H1 (cell line): ENCODE measurements at regions of chr2 and their contacts with region 1.

Region 1: GRCh38 chr2:110770959-110771431 is 38.6 kb downstream of the ACOXL start:
- DNase-seq: no peak
- H3K4me3 ChIP-seq: no peak overlapping the region
- H3K27ac ChIP-seq: no peak overlapping the region
- H3K4me1 ChIP-seq: peaks cover 18 to 43% (median 32%) of the 10 kb centered on the region in 4 experiments
- H3K27me3 ChIP-seq: no peaks in the 10 kb centered on the region
- CTCF ChIP-seq: no peak
- EP300 ChIP-seq: no peak
- POLR2A ChIP-seq: no peak
- RAD21 ChIP-seq: no peak

Region 2: DNA sequence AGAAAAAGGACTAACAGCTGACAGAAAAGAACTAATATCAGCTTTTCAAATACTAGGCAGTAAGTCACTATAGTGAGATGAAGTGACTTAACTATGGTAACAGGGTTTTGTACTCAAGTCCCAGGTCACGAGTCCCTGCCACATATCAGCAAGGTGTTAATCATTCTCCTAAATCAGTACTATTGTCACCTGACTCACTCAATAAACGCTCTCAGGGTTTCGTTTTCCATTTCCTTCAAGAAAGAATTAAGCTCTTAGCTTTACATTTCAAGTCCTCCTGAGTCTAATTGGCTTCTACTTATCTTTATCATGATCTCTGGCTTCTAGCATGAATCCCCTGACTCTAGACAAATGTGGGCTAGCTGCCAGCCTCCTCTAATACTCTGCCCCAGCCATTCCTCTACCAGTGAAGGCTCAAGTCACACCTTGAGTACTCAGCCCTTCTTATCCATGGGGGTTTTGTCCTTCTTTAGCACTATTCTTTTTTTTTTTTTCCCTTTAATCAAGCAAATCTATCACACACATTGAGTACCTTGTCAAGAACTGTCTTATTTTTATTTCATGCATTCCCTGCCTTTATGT is 113.2 kb before region 1 on chr2:
- CTCF ChIA-PET with region 1: no interaction called
- POLR2A ChIA-PET with region 1: no interaction called
- DNase-seq: no peak
- H3K4me3 ChIP-seq: no peak overlapping the region
- H3K27ac ChIP-seq: no peak overlapping the region
- H3K4me1 ChIP-seq: no peaks in the 10 kb centered on the region
- H3K27me3 ChIP-seq: no peaks in the 10 kb centered on the region
- CTCF ChIP-seq: no peak
- EP300 ChIP-seq: no peak
- POLR2A ChIP-seq: no peak
- RAD21 ChIP-seq: no peak

Region 3: DNA sequence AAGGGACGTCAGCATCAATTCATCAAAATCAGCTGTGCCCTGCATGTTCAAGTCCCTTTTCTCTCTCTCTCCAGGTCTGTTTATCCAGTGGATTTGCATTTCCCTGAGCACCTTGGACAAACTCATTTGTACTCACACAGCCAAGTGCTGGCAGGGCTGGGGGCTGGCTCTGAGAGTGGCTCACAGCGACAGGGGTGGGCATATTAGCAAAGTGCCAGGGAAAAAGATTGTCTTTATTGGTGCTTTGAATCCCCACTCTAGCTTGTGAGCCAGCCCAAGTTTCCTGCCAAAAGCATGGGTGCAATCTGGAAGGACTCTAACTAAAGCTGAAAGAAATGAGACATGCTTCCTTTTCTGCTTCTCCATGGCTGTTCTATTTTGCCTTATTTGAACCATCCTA is 18.0 kb after region 1 on chr2:
- CTCF ChIA-PET with region 1: interaction called, 22 read pairs
- POLR2A ChIA-PET with region 1: interaction called, 5 read pairs
- DNase-seq: peak in 1 of 2 experiments; percentile 14
- H3K4me3 ChIP-seq: no peak overlapping the region
- H3K27ac ChIP-seq: no peak overlapping the region
- H3K4me1 ChIP-seq: no peaks in the 10 kb centered on the region
- H3K27me3 ChIP-seq: no peaks in the 10 kb centered on the region
- CTCF ChIP-seq: no peak
- EP300 ChIP-seq: no peak
- POLR2A ChIP-seq: no peak
- RAD21 ChIP-seq: no peak

Region 4: DNA sequence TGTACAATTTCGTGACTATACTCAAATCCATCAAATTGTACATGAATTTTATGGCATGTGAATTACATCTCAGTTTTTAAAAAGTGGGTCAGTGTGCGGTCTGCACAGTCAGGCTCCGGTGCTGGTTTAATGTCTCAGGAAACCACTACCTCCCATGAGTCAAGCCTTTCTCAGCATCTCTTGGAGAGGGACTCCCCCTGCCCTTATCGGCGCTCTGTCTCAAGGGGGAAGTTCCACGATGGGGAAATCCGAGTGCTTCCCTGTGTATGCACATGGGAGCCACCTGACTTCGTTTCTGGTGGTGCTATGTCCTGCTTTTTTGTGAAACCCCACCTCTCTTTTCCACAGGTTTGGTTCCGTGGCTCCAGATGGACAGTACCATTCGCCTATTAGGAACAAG is 33.9 kb after region 1 on chr2:
- CTCF ChIA-PET with region 1: no interaction called
- POLR2A ChIA-PET with region 1: no interaction called
- DNase-seq: no peak
- H3K4me3 ChIP-seq: no peak overlapping the region
- H3K27ac ChIP-seq: no peak overlapping the region
- H3K4me1 ChIP-seq: peaks cover 2 to 19% (median 5%) of the 10 kb centered on the region in 4 experiments; a peak in 5 of 7 replicates
- H3K27me3 ChIP-seq: no peaks in the 10 kb centered on the region
- CTCF ChIP-seq: no peak
- EP300 ChIP-seq: no peak
- POLR2A ChIP-seq: no peak
- RAD21 ChIP-seq: no peak